Activated T-helper 2 cell treated with anti-CD3 and anti-CD28 coated beads, Interferon-gamma antibody, Interleukin-2, Interleukin-4, amounts not matched to agents 10 μg/mL and 5 μg/mL and 100 μg/mL, durations not matched to agents 14 hours and 24 hours and 36 hours (primary cell): ENCODE measurements at regions of chr2 and their contacts with region 1.

Region 1: GRCh38 chr2:136362676-136363390 is 244.9 kb upstream of the CXCR4 start:
- DNase-seq: no peak
- H3K4me3 Mint-ChIP-seq: peak overlapping the region; percentile 2
- H3K27ac Mint-ChIP-seq: peak overlapping the region; percentile 35
- H3K4me1 Mint-ChIP-seq: peaks cover 49% of the 10 kb centered on the region
- H3K27me3 Mint-ChIP-seq: peaks cover 1% of the 10 kb centered on the region

Region 2: GRCh38 chr2:136212423-136213378 is 150.1 kb before region 1 on chr2:
- intact Hi-C with region 1: loop called (anchors 5 kb)
- DNase-seq: no peak
- H3K4me3 Mint-ChIP-seq: no peak overlapping the region
- H3K27ac Mint-ChIP-seq: peak overlapping the region; percentile 52
- H3K4me1 Mint-ChIP-seq: peaks cover 46% of the 10 kb centered on the region
- H3K27me3 Mint-ChIP-seq: peaks cover 1% of the 10 kb centered on the region